Calu3 (cell line): ENCODE measurements at regions of chr6 and their contacts with region 1.

Region 1: GRCh38 chr6:168052291-168052891 is 26.6 kb downstream of the FRMD1 start:
- DNase-seq: peak; percentile 82
- H3K4me3 Mint-ChIP-seq: no peak overlapping the region
- H3K27ac Mint-ChIP-seq: no peak overlapping the region
- H3K4me1 Mint-ChIP-seq: no peaks in the 10 kb centered on the region
- H3K27me3 Mint-ChIP-seq: peaks cover 56% of the 10 kb centered on the region
- CTCF ChIP-seq: peak; percentile 27

Region 2: GRCh38 chr6:167907837-167908681 is 144.3 kb before region 1 on chr6:
- CTCF ChIA-PET with region 1: no interaction called
- intact Hi-C with region 1: loop called (anchors 1 kb)
- DNase-seq: peak; percentile 38
- H3K4me3 Mint-ChIP-seq: no peak overlapping the region
- H3K27ac Mint-ChIP-seq: peak overlapping the region; percentile 62
- H3K4me1 Mint-ChIP-seq: peaks cover 25% of the 10 kb centered on the region
- H3K27me3 Mint-ChIP-seq: no peaks in the 10 kb centered on the region
- CTCF ChIP-seq: peak; percentile 13

Region 3: DNA sequence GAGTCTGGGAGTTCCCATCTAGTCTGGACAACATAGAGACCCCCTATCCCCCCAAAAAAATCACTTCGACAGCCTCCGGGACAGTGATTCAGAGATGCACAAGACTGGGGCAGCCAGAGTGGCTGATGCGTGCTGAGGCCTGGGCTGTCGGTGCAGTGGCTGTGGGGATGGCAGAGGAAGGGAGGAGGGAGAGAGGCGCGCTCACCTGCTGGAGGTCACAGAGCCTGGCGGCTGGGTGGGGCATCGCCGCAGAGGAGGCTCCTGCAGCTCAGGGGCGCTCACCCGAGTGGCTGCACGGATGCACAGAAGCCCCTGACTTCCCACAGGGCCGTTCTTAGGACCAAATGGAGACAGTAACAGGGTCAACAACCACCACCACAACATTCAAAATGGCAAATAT is 571.3 kb after region 1 on chr6:
- CTCF ChIA-PET with region 1: no interaction called
- intact Hi-C with region 1: no loop called
- DNase-seq: no peak
- H3K4me3 Mint-ChIP-seq: no peak overlapping the region
- H3K27ac Mint-ChIP-seq: no peak overlapping the region
- H3K4me1 Mint-ChIP-seq: peaks cover 25% of the 10 kb centered on the region
- H3K27me3 Mint-ChIP-seq: no peaks in the 10 kb centered on the region
- CTCF ChIP-seq: no peak